ENCODE measurements at regions of chr12 and their contacts with region 1.

Region 1: GRCh38 chr12:118391424-118391823 is 15.1 kb downstream of the SUDS3 start:
- DNase-seq: no peak
- ATAC-seq: no peak
- H3K4me3 ChIP-seq: no peak overlapping the region
- H3K27ac ChIP-seq: no peak overlapping the region
- H3K4me1 ChIP-seq: no peaks in the 10 kb centered on the region
- CTCF ChIP-seq: no peak
- EP300 ChIP-seq: no peak
- POLR2A ChIP-seq: no peak
- RAD21 ChIP-seq: no peak

Region 2: GRCh38 chr12:118290130-118290529 is 101.3 kb before region 1 on chr12:
- CTCF ChIA-PET with region 1: no interaction called
- POLR2A ChIA-PET with region 1: no interaction called
- DNase-seq: no peak
- ATAC-seq: no peak; a peak in 1 of 6 replicates
- H3K4me3 ChIP-seq: no peak overlapping the region
- H3K27ac ChIP-seq: no peak overlapping the region
- H3K4me1 ChIP-seq: no peaks in the 10 kb centered on the region
- CTCF ChIP-seq: no peak
- EP300 ChIP-seq: no peak
- POLR2A ChIP-seq: no peak
- RAD21 ChIP-seq: no peak

Region 3: DNA sequence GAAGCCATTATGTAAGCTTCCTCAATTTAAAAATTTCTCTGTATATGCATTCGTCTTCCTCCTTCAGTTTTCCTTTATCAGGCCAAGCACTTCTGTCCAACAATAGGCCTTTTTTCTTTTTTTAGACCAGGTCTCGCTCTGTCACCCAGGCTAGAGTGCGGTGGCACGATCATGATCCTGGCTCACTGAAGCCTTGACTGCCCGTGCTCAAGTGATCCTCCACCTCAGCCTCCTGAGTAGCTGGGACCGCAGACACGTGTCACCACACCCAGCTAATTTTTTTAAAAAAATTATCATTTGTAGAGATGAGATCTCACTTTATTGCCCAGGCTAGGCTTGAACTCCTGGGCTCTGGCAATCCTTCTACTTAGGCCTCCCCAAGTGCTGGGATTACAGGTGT is 44.5 kb before region 1 on chr12:
- CTCF ChIA-PET with region 1: no interaction called
- POLR2A ChIA-PET with region 1: no interaction called
- DNase-seq: no peak
- ATAC-seq: no peak
- H3K4me3 ChIP-seq: no peak overlapping the region
- H3K27ac ChIP-seq: no peak overlapping the region
- H3K4me1 ChIP-seq: peaks cover 6% of the 10 kb centered on the region; the same call in 2 of the 3 replicates
- CTCF ChIP-seq: no peak
- EP300 ChIP-seq: no peak
- POLR2A ChIP-seq: no peak
- RAD21 ChIP-seq: no peak

Region 4: DNA sequence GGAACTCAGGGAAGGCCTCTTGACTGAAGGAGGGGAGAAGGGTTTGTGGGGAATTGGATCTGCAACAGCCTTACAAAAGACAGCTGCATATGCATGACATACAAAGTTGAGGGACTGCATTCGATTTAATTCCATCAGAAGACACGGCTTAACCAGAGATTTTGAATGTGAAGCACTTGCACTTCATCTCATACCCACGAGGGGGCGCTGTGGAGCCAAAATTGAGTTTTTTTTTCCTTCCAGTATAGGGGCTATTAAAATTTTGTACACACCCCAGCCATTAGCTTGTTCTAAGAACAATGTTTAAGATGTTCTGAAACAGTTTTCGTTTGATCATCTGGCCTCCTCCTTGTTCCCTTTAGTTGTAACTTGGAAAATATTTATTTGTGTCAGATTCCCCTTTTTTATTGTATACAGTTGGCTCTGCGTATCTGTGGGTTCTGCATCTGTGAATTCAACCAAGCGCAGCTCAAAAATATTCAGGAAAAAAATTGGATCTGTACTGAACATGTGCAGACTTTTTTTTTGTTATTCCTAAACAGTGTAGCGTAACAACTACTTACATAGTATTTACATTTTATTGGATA is 13.4 kb before region 1 on chr12:
- CTCF ChIA-PET with region 1: interaction called, 75 read pairs
- POLR2A ChIA-PET with region 1: no interaction called
- DNase-seq: peak; percentile 58 to 75
- ATAC-seq: peak; percentile 3 to 11; a peak in 3 of 6 replicates
- H3K4me3 ChIP-seq: peak overlapping the region; percentile 91
- H3K27ac ChIP-seq: peak overlapping the region; percentile 95 to 96; a peak in 5 of 6 replicates
- H3K4me1 ChIP-seq: peaks cover 15% of the 10 kb centered on the region
- CTCF ChIP-seq: peak; percentile 96
- EP300 ChIP-seq: no peak
- POLR2A ChIP-seq: no peak
- RAD21 ChIP-seq: peak; percentile 47 to 51; a peak in 4 of 5 replicates